AG04449 (cell line): ENCODE measurements at regions of chr1 and their contacts with region 1.

Region 1: GRCh38 chr1:212994926-212995325 is 20.7 kb downstream of the ANGEL2 start:
- DNase-seq: no peak
- H3K4me3 ChIP-seq: no peak overlapping the region
- CTCF ChIP-seq: no peak

Region 2: GRCh38 chr1:212692774-212693644 is 301.9 kb before region 1 on chr1:
- CTCF ChIA-PET with region 1: no interaction called
- POLR2A ChIA-PET with region 1: no interaction called
- DNase-seq: no peak
- H3K4me3 ChIP-seq: no peak overlapping the region
- CTCF ChIP-seq: no peak

Region 3: DNA sequence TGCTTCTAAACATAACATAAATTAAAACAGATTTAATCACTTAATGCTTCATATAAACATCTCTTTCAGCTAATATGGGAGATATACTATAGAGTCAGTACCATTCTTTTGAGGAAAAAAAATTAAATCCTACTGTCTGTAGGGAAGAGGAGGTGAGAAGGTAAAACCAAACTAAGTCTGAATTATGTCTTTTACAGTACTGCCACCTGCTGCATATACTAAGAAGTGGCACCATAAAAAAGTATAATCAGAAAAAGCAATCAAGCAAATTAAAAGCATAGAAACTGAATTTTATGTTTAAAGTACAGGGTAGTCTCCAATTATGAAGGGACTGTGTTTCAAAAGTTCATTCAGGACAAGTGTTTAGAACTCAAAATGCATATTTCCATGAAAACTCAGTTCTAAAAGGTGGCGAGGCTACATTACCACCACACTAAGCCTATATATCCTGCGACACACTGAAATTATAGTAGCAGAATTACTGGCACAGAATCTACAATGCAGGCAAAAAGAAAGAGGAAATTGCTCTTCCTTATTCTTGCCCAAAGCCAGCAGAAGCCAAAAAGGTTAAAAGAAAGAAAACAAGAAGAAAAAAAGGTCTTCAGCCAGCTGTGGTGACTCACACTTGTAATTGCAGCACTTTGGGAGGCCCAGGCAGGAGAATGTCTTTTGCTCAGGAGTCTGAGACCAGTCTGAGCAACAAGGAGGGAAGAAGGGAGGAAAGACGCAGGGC is 212.3 kb before region 1 on chr1:
- CTCF ChIA-PET with region 1: interaction called, 14 read pairs
- POLR2A ChIA-PET with region 1: no interaction called
- DNase-seq: no peak
- H3K4me3 ChIP-seq: no peak overlapping the region
- CTCF ChIP-seq: peak; percentile 36

Region 4: GRCh38 chr1:212791676-212792395 is 203.1 kb before region 1 on chr1 and contains the starts of genes NSL1 and TATDN3:
- CTCF ChIA-PET with region 1: interaction called, 25 read pairs
- POLR2A ChIA-PET with region 1: no interaction called
- DNase-seq: no peak
- H3K4me3 ChIP-seq: peak within 1 kb of the TSS; percentile 95
- CTCF ChIP-seq: no peak

Region 5: GRCh38 chr1:212814537-212815334 is 180.2 kb before region 1 on chr1:
- CTCF ChIA-PET with region 1: interaction called, 24 read pairs
- POLR2A ChIA-PET with region 1: no interaction called
- DNase-seq: no peak
- H3K4me3 ChIP-seq: no peak overlapping the region
- CTCF ChIP-seq: no peak

Region 6: DNA sequence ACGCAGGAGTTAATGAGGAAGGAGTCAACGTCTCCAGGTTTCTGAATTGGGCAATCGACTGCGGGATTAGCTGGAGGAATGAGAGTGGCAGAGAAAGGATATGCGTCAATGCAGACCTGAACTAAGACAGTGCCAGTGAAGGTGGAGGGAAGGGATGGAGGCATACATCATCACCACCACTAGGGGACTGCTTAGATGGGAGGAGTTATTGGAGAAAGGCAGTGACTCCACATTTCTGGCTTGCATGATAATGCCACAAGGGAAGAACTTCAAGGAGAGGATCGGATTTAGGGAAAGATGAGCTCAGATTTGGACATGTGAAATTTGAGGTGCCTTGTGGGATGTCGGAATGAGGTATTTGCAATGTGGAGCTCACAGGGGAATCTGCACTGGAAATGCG is 27.1 kb before region 1 on chr1:
- CTCF ChIA-PET with region 1: interaction called, 12 read pairs
- POLR2A ChIA-PET with region 1: no interaction called
- DNase-seq: peak; percentile 33
- H3K4me3 ChIP-seq: no peak overlapping the region
- CTCF ChIP-seq: peak; percentile 72

Region 7: GRCh38 chr1:213015099-213016050 is 20.4 kb after region 1 on chr1 and contains the start of gene ANGEL2:
- CTCF ChIA-PET with region 1: interaction called, 27 read pairs
- POLR2A ChIA-PET with region 1: interaction called, 3 read pairs
- DNase-seq: peak; percentile 82
- H3K4me3 ChIP-seq: peak within 1 kb of the TSS; percentile 83
- CTCF ChIP-seq: no peak

Region 8: GRCh38 chr1:213110349-213111300 is 115.7 kb after region 1 on chr1:
- CTCF ChIA-PET with region 1: no interaction called
- POLR2A ChIA-PET with region 1: no interaction called
- DNase-seq: no peak
- H3K4me3 ChIP-seq: no peak overlapping the region
- CTCF ChIP-seq: no peak

Region 9: DNA sequence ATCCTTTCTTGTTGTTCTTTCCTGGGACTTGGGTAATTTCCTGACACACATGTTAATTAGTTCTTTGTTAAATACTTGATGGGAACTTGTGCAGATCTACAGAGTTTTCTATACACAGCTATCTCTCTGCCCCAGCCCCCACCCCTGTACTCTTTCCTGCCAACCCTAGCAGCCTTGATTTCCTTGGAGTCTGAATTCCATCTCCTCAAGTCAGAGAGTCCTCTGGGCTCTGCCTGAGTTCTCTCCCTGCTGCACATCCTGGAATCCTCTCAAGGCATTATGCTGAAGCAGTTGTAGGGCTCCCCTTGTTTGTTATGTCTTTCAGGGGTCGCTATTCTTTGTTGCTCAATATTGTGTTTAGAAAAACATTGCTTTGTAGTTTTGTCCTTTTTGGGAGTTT is 440.8 kb after region 1 on chr1:
- CTCF ChIA-PET with region 1: no interaction called
- POLR2A ChIA-PET with region 1: no interaction called
- DNase-seq: no peak
- H3K4me3 ChIP-seq: no peak overlapping the region
- CTCF ChIP-seq: no peak